OCI-LY7 (cell line): ENCODE measurements at regions of chr17 and their contacts with region 1.

Region 1: DNA sequence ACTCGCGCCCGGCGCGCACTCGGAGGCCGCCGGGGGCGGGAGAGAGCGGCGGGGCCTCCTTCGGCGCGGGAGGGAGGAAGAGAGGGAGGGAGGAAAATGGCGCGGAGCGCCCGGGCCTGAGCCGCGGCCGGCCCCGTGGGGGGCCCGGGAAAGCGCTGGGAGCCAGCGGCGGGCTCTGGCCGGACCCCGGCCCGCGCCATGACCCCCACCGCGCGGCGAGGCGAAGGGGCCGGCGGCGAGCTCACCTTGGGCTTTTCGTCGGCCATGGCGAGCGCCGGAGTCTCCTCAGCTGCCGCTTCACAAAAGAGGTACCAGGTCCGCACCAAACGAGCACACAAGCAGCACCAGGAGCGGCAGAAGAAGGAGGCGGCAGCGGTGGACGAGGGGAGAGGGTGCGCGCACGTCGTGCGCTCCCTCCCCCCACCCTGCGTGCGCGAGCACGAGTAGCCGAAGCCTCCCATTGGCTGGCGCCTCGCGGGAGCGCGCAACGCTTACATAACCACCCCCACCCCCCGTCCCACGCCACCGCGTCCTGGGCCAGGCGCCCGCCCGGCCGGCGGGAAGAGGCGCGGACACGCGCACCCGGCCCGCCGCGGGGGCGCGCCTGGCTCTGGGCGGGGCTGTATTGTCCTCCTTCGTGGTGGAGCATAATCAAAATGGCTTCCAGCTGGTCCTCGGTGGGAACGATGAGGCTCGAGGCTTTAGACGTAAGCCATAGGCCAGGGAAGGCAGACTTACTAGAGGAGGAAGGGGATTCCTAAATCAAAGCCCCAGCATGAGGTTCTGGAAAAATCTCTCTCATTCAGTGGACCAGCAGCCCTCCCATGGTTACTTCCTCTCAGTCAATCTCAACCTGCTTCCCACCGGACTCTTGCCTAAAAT is at the start of gene SUMO2:
- DNase-seq: peak; percentile 100
- H3K4me3 ChIP-seq: peak within 1 kb of the TSS; percentile 88
- H3K27ac ChIP-seq: peak within 1 kb of the TSS; percentile 91
- H3K4me1 ChIP-seq: peaks cover 24% of the 10 kb centered on the region
- CTCF ChIP-seq: peak; percentile 41; the same call in 1 of the 2 replicates
- total RNA-seq, gene SUMO2: 286 and 296 TPM in 2 replicates

Region 2: GRCh38 chr17:75046582-75047289 is 136.1 kb before region 1 on chr17 and contains the starts of genes ATP5PD and KCTD2:
- CTCF ChIA-PET with region 1: no interaction called
- POLR2A ChIA-PET with region 1: no interaction called
- intact Hi-C with region 1: loop called (anchors 2 kb)
- DNase-seq: peak; percentile 99
- H3K4me3 ChIP-seq: peak within 1 kb of the TSS; percentile 75
- H3K27ac ChIP-seq: peak within 1 kb of the TSS; percentile 43
- H3K4me1 ChIP-seq: peaks cover 14% of the 10 kb centered on the region
- CTCF ChIP-seq: 0 out of 2 replicates have a peak, but pooled peaks have one; percentile 15
- total RNA-seq, gene ATP5PD: 293 and 301 TPM in 2 replicates
- total RNA-seq, gene KCTD2: 26.0 and 29.8 TPM in 2 replicates

Region 3: GRCh38 chr17:75131280-75132017 is 51.4 kb before region 1 on chr17 and contains the start of gene NT5C:
- CTCF ChIA-PET with region 1: no interaction called
- POLR2A ChIA-PET with region 1: interaction called, 3 read pairs
- intact Hi-C with region 1: loop called (anchors 2 kb)
- DNase-seq: peak; percentile 95
- H3K4me3 ChIP-seq: peak within 1 kb of the TSS; percentile 89
- H3K27ac ChIP-seq: peak within 1 kb of the TSS; percentile 69
- H3K4me1 ChIP-seq: peaks cover 28% of the 10 kb centered on the region
- CTCF ChIP-seq: peak; percentile 90
- total RNA-seq, gene NT5C: 229 and 259 TPM in 2 replicates

Region 4: DNA sequence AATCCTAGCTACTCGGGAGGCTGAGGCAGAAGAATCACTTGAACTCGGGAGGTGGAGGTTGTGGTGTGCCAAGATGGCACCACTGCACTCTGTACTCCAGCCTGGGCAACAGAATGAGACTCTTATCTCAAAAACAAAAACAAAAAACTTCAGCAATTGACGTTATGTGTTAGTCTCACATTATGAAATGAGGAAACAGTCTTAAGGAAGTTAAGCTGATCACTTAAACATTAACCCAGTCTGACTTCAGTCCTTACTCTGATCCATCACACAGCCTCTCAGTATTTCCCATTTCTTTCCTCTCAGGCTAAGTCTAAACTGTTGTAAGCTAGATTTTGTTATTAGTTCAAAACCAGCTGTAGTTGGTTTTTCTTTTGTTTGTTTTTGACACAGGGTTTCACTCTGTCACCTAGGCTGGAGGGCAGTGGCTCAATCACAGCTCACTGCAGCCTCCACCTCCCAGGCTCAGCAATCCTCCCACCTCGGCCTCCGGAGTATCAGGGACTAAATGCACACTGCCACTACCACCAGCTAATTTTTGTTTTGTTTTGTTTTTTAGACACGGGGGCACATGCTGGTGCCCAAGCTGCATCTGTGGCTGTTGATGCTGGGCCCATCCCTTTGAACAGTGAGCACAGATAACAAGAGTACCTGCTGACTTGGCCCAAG is 34.8 kb before region 1 on chr17:
- CTCF ChIA-PET with region 1: no interaction called
- POLR2A ChIA-PET with region 1: no interaction called
- intact Hi-C with region 1: no loop called
- DNase-seq: no peak
- H3K4me3 ChIP-seq: no peak overlapping the region
- H3K27ac ChIP-seq: no peak overlapping the region
- H3K4me1 ChIP-seq: peaks cover 14% of the 10 kb centered on the region
- CTCF ChIP-seq: no peak

Region 5: GRCh38 chr17:75205037-75205792 is 22.4 kb after region 1 on chr17 and contains the start of gene NUP85:
- CTCF ChIA-PET with region 1: no interaction called
- POLR2A ChIA-PET with region 1: interaction called, 6 read pairs
- intact Hi-C with region 1: loop called (anchors 1 kb)
- DNase-seq: peak; percentile 96
- H3K4me3 ChIP-seq: peak within 1 kb of the TSS; percentile 86
- H3K27ac ChIP-seq: peak within 1 kb of the TSS; percentile 72
- H3K4me1 ChIP-seq: peaks cover 19% of the 10 kb centered on the region
- CTCF ChIP-seq: no peak
- total RNA-seq, gene NUP85: 129 and 130 TPM in 2 replicates

Region 6: GRCh38 chr17:75284340-75284739 is 101.5 kb after region 1 on chr17:
- CTCF ChIA-PET with region 1: no interaction called
- POLR2A ChIA-PET with region 1: no interaction called
- intact Hi-C with region 1: no loop called
- DNase-seq: no peak
- H3K4me3 ChIP-seq: no peak overlapping the region
- H3K27ac ChIP-seq: no peak overlapping the region
- H3K4me1 ChIP-seq: peaks cover 13% of the 10 kb centered on the region
- CTCF ChIP-seq: peak; percentile 34